PC-9 (cell line): ENCODE measurements at regions of chrX and their contacts with region 1.

Region 1: GRCh38 chrX:103686199-103687072 is at the start of gene MORF4L2:
- DNase-seq: peak; percentile 89 to 99
- H3K4me3 ChIP-seq: peak within 1 kb of the TSS; percentile 98
- H3K27ac ChIP-seq: peak within 1 kb of the TSS; percentile 96
- H3K4me1 ChIP-seq: peaks cover 21% of the 10 kb centered on the region
- H3K27me3 ChIP-seq: no peaks in the 10 kb centered on the region
- CTCF ChIP-seq: no peak
- total RNA-seq, gene MORF4L2: 385 and 417 TPM in 2 replicates

Region 2: GRCh38 chrX:103442536-103442901 is 243.9 kb before region 1 on chrX:
- CTCF ChIA-PET with region 1: no interaction called
- POLR2A ChIA-PET with region 1: no interaction called
- intact Hi-C with region 1: no loop called
- DNase-seq: no peak
- H3K4me3 ChIP-seq: no peak overlapping the region
- H3K27ac ChIP-seq: no peak overlapping the region
- H3K4me1 ChIP-seq: no peaks in the 10 kb centered on the region
- H3K27me3 ChIP-seq: no peaks in the 10 kb centered on the region
- CTCF ChIP-seq: no peak

Region 3: DNA sequence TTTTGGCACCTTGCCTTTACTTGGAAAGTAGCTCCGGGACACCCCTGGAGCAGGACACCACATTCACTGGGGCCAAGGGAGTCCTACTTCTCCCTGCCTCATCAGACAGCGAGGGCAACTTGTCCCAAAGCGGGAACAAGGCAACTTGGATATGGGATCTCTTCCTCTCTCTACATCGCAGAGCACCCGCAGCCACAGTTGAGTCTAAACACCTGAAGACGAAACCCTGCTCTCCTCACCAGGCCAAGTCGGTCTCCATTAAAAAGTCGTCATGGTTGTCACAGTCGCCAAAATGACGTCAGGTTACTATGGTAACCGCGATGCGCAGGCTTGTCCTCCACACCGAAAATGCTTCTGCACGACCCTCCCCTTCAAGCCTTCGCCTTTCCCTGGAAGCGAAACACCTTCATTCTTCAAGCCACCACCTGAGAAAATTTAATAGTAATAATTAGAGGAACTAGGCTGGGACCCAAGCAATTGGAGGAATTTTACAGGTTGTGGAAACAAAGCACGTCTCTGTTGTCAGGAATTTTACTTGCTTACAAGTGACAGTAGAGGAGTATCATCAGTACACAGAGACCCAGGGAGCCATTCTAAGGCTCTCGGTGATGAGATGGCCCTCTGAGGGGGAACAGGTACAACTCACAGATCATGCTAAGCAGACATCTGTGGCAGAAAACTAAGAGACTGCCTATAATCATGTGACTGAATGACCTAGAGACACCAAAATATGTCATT is 131.6 kb before region 1 on chrX:
- CTCF ChIA-PET with region 1: no interaction called
- POLR2A ChIA-PET with region 1: no interaction called
- intact Hi-C with region 1: loop called (anchors 5 kb)
- DNase-seq: peak; percentile 60 to 69
- H3K4me3 ChIP-seq: peak overlapping the region; percentile 93
- H3K27ac ChIP-seq: peak overlapping the region; percentile 52
- H3K4me1 ChIP-seq: peaks cover 6% of the 10 kb centered on the region; the same call in 1 of the 2 replicates
- H3K27me3 ChIP-seq: no peaks in the 10 kb centered on the region
- CTCF ChIP-seq: no peak

Region 4: DNA sequence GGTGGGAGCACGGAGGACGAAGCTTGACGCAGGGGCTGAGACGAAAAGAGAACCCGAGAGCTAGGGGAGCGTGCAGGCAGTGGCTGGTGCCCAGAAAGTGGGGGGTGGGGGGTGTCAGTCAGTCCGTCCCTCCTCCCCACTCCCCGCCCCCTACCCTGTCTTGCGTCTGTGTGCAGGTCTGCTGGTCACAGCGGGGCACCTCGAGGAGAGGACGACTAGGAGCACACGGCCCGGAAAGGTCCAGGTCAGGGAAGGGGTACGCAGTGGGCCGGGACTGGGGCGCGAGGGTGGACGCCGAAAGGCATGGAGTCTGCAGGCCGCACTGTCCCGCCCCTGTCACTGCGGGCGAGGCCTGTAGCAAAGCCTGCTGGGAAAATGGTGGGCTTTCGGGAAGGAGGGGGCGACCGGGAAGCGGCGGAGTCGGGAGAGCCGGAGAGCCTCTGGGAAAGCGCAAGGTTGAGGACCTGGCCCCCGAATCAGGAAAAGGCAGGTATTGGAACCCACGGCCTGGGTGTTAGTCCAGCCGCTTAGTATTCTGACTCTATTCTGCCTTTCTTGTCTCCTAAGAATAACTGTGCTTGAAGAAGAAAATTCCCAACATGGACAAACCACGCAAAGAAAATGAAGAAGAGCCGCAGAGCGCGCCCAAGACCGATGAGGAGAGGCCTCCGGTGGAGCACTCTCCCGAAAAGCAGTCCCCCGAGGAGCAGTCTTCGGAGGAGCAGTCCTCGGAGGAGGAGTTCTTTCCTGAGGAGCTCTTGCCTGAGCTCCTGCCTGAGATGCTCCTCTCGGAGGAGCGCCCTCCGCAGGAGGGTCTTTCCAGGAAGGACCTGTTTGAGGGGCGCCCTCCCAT is 56.9 kb before region 1 on chrX:
- CTCF ChIA-PET with region 1: interaction called, 9 read pairs
- POLR2A ChIA-PET with region 1: interaction called, 31 read pairs
- intact Hi-C with region 1: loop called (anchors 2 kb)
- DNase-seq: peak; percentile 56 to 59
- H3K4me3 ChIP-seq: peak overlapping the region; percentile 91
- H3K27ac ChIP-seq: peak overlapping the region; percentile 78
- H3K4me1 ChIP-seq: peaks cover 14% of the 10 kb centered on the region
- H3K27me3 ChIP-seq: no peaks in the 10 kb centered on the region
- CTCF ChIP-seq: no peak; the same call in 1 of the 2 replicates

Region 5: DNA sequence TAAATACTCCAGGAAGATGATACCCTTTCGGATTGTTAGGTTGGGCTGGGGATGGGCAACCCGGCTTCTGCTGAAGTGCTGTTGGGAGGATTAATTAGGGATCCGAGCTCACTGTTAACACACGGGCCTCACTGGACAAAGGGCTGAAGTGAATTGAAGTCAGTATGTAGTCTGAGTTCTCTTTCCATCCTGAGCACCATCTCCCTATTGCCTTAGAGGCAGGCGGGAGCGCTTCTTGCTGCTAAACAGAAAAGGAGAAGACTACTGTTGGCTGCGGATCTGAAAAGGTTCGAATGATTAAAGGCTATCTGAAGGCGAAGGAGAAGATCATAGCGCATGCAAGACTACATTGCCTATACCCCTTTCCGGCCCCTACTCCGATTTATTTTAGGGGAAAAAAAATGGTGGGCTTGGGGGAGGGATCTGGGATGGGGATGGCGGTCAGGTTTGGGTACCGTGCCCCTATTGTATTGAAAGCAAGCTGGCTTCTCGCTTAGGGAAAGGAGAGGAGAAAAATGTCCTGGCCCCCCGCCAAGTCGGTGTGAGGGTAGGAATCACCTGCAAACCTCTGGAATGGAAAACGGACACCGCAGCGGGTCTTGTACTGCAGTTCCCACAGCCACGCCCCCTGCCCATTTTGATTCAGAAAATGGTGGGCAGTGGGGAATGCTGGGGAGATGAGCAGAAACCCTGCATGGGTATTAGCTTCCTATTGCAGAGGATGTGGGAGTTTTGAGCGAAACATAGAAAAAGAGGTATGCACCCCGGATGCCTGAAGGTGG is 22.3 kb before region 1 on chrX:
- CTCF ChIA-PET with region 1: interaction called, 11 read pairs
- POLR2A ChIA-PET with region 1: interaction called, 11 read pairs
- intact Hi-C with region 1: no loop called
- DNase-seq: no peak
- H3K4me3 ChIP-seq: no peak overlapping the region
- H3K27ac ChIP-seq: no peak overlapping the region
- H3K4me1 ChIP-seq: peaks cover 16% of the 10 kb centered on the region
- H3K27me3 ChIP-seq: no peaks in the 10 kb centered on the region
- CTCF ChIP-seq: no peak

Region 6: DNA sequence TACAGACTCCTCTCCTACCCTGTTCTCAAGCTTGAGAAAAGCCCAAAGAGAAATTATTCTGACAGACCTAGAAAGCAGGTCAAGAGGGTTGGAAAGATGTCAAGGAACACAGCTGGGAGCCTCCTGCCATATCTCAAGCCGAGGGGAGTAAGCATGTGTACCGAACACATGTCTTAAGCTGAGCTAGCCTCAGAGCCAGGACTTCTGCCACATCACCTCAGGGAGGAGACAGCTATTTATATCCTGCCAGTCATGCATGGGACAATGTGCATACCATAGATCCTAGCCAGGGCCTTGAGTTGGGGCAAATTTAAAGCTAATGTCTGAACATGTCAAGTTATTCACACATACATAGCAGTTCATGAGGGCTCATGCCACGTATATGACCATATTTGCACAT is 36.1 kb after region 1 on chrX:
- CTCF ChIA-PET with region 1: no interaction called
- POLR2A ChIA-PET with region 1: no interaction called
- intact Hi-C with region 1: no loop called
- DNase-seq: no peak
- H3K4me3 ChIP-seq: no peak overlapping the region
- H3K27ac ChIP-seq: no peak overlapping the region
- H3K4me1 ChIP-seq: peaks cover 5% of the 10 kb centered on the region
- H3K27me3 ChIP-seq: no peaks in the 10 kb centered on the region
- CTCF ChIP-seq: no peak

Region 7: DNA sequence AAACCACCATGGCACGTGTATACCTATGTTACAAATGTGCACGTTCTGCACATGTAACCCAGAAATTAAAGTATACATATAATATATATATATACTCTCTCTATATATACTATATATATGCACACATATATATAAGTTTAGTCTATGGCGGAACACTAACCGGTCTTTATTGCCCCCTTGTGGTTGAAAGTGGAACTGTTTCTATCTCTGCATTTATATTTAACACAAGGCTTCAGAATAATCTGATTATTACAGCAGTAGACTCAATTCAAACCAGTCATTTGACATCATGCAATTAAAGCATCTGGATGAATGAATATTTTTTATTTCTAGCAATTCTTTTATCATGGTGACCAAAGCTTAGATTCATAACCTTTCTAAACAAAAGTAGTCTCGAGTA is 131.1 kb after region 1 on chrX:
- CTCF ChIA-PET with region 1: no interaction called
- POLR2A ChIA-PET with region 1: no interaction called
- intact Hi-C with region 1: loop called (anchors 1 kb)
- DNase-seq: peak; percentile 12 to 51
- H3K4me3 ChIP-seq: no peak overlapping the region
- H3K27ac ChIP-seq: no peak overlapping the region
- H3K4me1 ChIP-seq: no peaks in the 10 kb centered on the region
- H3K27me3 ChIP-seq: no peaks in the 10 kb centered on the region
- CTCF ChIP-seq: peak; percentile 76

Region 8: DNA sequence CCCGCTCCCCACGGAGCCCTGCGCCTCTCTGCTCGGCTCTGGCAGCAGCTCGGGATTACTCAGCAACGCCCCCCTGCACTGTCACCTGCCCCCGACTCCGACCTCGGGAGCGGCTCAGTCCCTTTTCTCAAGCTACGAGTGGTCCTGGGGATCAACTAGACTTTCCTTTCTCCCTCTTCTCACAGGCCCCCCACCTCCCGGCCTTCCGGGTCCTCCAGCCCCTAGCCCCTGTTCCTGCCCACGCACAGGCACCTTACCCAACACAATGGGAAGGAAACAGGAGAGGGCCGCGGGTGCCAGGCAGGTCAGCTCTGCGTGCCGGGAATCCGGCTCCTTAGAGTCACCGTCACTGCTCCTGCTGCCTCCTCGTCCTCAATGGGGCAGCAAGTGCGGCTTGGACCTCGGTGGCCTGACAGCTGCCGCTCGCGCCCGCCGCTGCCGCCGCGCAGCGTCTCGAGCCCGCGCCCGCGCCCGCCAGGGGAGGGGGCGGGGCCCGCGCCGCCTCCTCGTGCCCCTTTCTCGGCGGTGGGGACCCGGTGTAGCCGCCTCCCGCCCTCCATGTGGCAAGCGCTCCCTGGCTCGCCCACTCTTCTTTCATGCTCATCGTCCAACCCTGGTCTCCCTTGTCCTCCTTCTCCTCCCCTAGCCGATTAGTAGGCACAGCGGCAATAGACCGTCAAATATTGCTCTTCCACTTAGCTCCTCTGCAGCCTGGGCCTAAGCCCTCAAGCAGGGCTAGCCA is 145.5 kb after region 1 on chrX and contains the start of gene RAB9B:
- CTCF ChIA-PET with region 1: no interaction called
- POLR2A ChIA-PET with region 1: no interaction called
- intact Hi-C with region 1: no loop called
- DNase-seq: no peak
- H3K4me3 ChIP-seq: no peak within 1 kb of the TSS
- H3K27ac ChIP-seq: no peak within 1 kb of the TSS
- H3K4me1 ChIP-seq: no peaks in the 10 kb centered on the region
- H3K27me3 ChIP-seq: peaks cover 24% of the 10 kb centered on the region
- CTCF ChIP-seq: no peak
- total RNA-seq, gene RAB9B: not detected in 2 replicates